Caco-2 (cell line): ENCODE measurements at regions of chr6 and their contacts with region 1.

Region 1: DNA sequence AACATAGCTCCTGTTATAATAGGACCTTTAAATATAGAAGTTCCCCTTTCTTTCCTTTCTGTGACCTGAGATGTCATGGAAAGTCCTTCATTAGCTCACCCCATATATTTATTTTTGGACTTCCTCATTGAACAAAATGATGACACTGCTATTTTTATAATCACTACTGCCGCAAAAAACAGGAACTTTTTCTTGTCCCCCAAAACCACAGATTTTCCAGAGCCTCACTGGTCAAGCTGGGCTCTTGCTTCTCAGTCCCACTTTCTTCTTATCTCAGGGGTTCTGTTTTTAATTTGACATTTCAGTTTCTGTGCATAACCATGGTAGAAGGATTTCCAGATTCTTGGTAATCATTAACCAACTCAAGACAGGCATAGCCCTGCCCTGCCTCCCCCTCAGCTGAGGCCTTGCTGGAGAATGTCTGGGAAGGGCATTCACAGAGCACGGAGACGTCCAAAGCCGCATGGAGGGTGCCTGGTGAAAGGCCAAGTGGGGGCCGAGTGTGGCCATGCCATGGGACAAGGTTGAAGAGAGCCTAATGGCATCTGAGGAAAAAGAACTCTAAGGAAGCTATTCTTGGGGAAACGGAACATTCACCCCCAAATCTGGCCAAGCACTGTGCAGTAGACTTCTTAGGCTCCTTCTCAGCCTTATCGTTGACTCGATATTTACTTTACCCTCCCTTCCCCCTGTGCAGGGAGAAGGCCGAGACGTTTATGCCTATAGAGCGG is 73.7 kb downstream of the EDN1 start:
- DNase-seq: peak; percentile 80 to 90
- H3K4me3 ChIP-seq: no peak overlapping the region
- H3K4me3 Mint-ChIP-seq: peak overlapping the region; percentile 65
- H3K27ac Mint-ChIP-seq: peak overlapping the region; percentile 95
- H3K4me1 ChIP-seq: peaks cover 75% of the 10 kb centered on the region
- H3K4me1 Mint-ChIP-seq: peaks cover 43% of the 10 kb centered on the region
- H3K27me3 ChIP-seq: no peaks in the 10 kb centered on the region
- H3K27me3 Mint-ChIP-seq: no peaks in the 10 kb centered on the region
- CTCF ChIP-seq: no peak

Region 2: DNA sequence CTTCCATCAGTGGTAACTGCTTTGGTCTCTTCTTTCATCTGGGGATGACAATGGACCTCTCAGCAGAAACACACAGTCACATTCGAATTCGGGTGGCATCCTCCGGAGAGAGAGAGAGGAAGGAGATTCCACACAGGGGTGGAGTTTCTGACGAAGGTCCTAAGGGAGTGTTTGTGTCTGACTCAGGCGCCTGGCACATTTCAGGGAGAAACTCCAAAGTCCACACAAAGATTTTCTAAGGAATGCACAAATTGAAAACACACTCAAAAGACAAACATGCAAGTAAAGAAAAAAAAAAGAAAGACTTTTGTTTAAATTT is 67.6 kb before region 1 on chr6:
- CTCF ChIA-PET with region 1: no interaction called
- POLR2A ChIA-PET with region 1: interaction called, 9 read pairs
- intact Hi-C with region 1: loop called (anchors 2 kb)
- DNase-seq: peak; percentile 79 to 87
- H3K4me3 ChIP-seq: no peak overlapping the region
- H3K4me3 Mint-ChIP-seq: peak overlapping the region; percentile 61
- H3K27ac Mint-ChIP-seq: peak overlapping the region; percentile 91
- H3K4me1 ChIP-seq: peaks cover 63% of the 10 kb centered on the region
- H3K4me1 Mint-ChIP-seq: peaks cover 49% of the 10 kb centered on the region
- H3K27me3 ChIP-seq: no peaks in the 10 kb centered on the region
- H3K27me3 Mint-ChIP-seq: no peaks in the 10 kb centered on the region
- CTCF ChIP-seq: no peak

Region 3: GRCh38 chr6:12331956-12332749 is 31.7 kb before region 1 on chr6:
- CTCF ChIA-PET with region 1: interaction called, 4 read pairs
- POLR2A ChIA-PET with region 1: interaction called, 3 read pairs
- intact Hi-C with region 1: loop called (anchors 1 kb)
- DNase-seq: peak; percentile 86 to 90
- H3K4me3 ChIP-seq: no peak overlapping the region
- H3K4me3 Mint-ChIP-seq: peak overlapping the region; percentile 34
- H3K27ac Mint-ChIP-seq: peak overlapping the region; percentile 91
- H3K4me1 ChIP-seq: peaks cover 44% of the 10 kb centered on the region
- H3K4me1 Mint-ChIP-seq: peaks cover 54% of the 10 kb centered on the region
- H3K27me3 ChIP-seq: no peaks in the 10 kb centered on the region; the same call in 1 of the 2 replicates
- H3K27me3 Mint-ChIP-seq: no peaks in the 10 kb centered on the region
- CTCF ChIP-seq: no peak

Region 4: DNA sequence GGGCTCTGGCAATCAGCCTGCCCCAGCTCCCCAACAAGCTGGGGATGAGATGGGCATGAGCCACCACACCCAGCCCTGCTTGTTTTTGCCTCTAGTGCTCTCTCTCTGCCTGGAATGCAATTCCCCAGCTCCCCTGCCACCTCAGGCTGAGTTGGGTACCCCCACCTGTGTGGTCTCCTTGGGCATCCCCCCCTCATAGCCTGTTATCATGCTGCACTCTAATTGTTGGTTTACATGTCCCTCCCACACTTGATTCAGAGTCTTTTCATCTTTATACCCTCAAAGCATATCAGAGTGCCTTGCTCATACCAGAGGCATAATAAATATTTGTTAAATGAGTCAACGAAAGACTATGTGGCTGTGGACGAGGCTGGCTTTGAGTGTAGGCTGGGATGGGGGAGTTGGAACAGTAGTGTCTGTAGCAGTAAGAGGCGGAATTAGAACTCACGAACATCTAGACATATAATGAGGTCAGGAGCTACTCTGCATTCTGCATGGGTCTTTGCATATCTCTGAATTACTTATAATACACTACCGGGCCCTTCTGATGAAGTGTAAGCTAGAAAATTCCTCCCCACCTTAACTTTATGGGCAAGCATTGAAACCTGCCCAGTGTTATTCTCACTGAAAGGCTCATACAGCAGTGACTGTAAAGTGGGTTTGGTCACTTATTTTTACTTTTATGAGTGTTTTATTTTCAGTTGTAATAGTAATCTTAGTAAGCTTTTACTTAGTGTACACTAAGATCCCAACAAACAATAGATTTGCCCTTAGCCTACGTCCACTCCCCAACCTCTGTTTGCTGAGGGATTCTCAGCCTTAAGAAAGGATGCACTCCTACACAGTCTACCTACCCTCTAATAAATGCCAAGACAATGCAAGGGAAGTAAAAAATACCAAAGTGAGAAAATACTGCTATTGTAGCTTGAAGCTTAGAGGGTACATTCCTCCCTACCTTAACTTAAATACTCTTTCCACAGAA is 15.0 kb before region 1 on chr6:
- CTCF ChIA-PET with region 1: no interaction called
- POLR2A ChIA-PET with region 1: interaction called, 3 read pairs
- intact Hi-C with region 1: loop called (anchors 2 kb)
- DNase-seq: peak; percentile 73 to 83
- H3K4me3 ChIP-seq: no peak overlapping the region
- H3K4me3 Mint-ChIP-seq: peak overlapping the region; percentile 55
- H3K27ac Mint-ChIP-seq: peak overlapping the region; percentile 96
- H3K4me1 ChIP-seq: peaks cover 20% of the 10 kb centered on the region
- H3K4me1 Mint-ChIP-seq: peaks cover 34% of the 10 kb centered on the region
- H3K27me3 ChIP-seq: no peaks in the 10 kb centered on the region
- H3K27me3 Mint-ChIP-seq: peaks cover 2% of the 10 kb centered on the region
- CTCF ChIP-seq: no peak

Region 5: GRCh38 chr6:12383448-12383847 is 19.6 kb after region 1 on chr6:
- CTCF ChIA-PET with region 1: no interaction called
- POLR2A ChIA-PET with region 1: no interaction called
- intact Hi-C with region 1: no loop called
- DNase-seq: no peak
- H3K4me3 ChIP-seq: no peak overlapping the region
- H3K4me3 Mint-ChIP-seq: no peak overlapping the region
- H3K27ac Mint-ChIP-seq: no peak overlapping the region
- H3K4me1 ChIP-seq: no peaks in the 10 kb centered on the region
- H3K4me1 Mint-ChIP-seq: no peaks in the 10 kb centered on the region
- H3K27me3 ChIP-seq: no peaks in the 10 kb centered on the region
- H3K27me3 Mint-ChIP-seq: no peaks in the 10 kb centered on the region
- CTCF ChIP-seq: no peak

Region 6: DNA sequence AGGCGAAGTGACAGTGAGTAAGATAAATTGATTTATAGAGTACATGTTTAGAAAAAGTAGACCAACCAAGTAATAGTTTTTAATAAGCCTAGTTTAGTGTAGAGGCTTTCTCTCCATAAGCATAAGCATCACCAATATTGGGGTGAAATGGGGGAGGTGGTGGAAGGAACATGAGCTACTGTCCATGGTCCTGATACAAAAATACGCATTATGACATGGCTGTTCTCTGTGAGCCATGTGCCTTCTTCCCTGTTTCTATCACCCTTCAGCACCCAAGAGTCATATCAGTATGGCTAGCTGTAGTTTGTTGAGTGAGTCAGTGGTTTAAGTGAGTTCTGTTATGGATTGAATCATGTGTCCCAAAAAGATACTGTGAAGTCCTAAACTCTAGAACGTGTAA is 77.2 kb after region 1 on chr6:
- CTCF ChIA-PET with region 1: no interaction called
- POLR2A ChIA-PET with region 1: no interaction called
- intact Hi-C with region 1: loop called (anchors 10 kb)
- DNase-seq: peak in 1 of 2 experiments; percentile 18
- H3K4me3 ChIP-seq: no peak overlapping the region
- H3K4me3 Mint-ChIP-seq: no peak overlapping the region
- H3K27ac Mint-ChIP-seq: no peak overlapping the region
- H3K4me1 ChIP-seq: peaks cover 45% of the 10 kb centered on the region
- H3K4me1 Mint-ChIP-seq: peaks cover 29% of the 10 kb centered on the region
- H3K27me3 ChIP-seq: no peaks in the 10 kb centered on the region
- H3K27me3 Mint-ChIP-seq: no peaks in the 10 kb centered on the region
- CTCF ChIP-seq: no peak

Region 7: GRCh38 chr6:12483712-12484111 is 119.9 kb after region 1 on chr6:
- CTCF ChIA-PET with region 1: no interaction called
- POLR2A ChIA-PET with region 1: interaction called, 4 read pairs
- intact Hi-C with region 1: loop called (anchors 2 kb)
- DNase-seq: no peak
- H3K4me3 ChIP-seq: no peak overlapping the region
- H3K4me3 Mint-ChIP-seq: peak overlapping the region; percentile 21
- H3K27ac Mint-ChIP-seq: peak overlapping the region; percentile 63
- H3K4me1 ChIP-seq: peaks cover 40% of the 10 kb centered on the region
- H3K4me1 Mint-ChIP-seq: peaks cover 42% of the 10 kb centered on the region
- H3K27me3 ChIP-seq: no peaks in the 10 kb centered on the region
- H3K27me3 Mint-ChIP-seq: no peaks in the 10 kb centered on the region
- CTCF ChIP-seq: no peak